ENCODE measurements at regions of chr9 and their contacts with region 1.

Region 1: DNA sequence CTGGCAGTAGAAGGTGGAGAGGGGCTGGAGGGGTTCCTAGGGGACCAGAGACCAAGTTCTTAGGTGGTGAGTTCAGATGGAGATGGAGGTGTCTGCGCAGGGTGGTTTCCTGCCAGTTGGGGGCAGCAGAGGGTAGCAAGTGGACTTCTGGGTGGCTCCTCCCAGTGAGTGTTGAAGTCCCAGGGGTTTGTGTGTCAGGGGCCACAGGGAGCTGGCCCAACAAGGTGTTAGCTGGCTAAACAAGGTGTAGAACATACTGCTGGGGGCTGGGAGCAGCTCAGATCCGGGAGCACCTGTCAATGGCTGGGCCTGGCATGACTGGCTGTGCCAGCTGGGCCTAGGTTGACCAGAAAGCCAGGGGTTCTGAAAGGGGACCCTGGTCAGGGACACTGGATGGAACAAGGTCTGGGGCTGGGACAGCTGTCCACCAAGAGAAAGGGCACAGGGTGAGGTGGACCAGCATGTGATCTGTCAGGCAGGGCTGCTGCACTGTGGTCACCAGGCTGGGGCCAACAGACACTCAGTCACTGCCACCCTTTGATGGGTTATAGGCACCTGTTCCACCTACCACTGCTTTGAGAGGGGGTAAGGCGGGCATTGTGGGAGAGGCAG is 35.6 kb downstream of the DAB2IP start:
- DNase-seq: peak; percentile 76 to 92 (median 87)
- ATAC-seq: peak; percentile 61 to 68
- H3K4me3 ChIP-seq: no peak overlapping the region
- H3K27ac ChIP-seq: no peak overlapping the region
- H3K4me1 ChIP-seq: peaks cover 6% of the 10 kb centered on the region
- H3K27me3 ChIP-seq: no peaks in the 10 kb centered on the region

Region 2: GRCh38 chr9:121498150-121498486 is 188.9 kb before region 1 on chr9:
- intact Hi-C with region 1: no loop called
- DNase-seq: peak in 2 of 3 donors; percentile 43 to 73
- ATAC-seq: peak; percentile 54 to 65
- H3K4me3 ChIP-seq: peak overlapping the region; percentile 59
- H3K27ac ChIP-seq: peak overlapping the region; percentile 57
- H3K4me1 ChIP-seq: peaks cover 2% of the 10 kb centered on the region
- H3K27me3 ChIP-seq: no peaks in the 10 kb centered on the region

Region 3: GRCh38 chr9:121545875-121546423 is 141.1 kb before region 1 on chr9:
- intact Hi-C with region 1: loop called in 2 of 4 experiments (anchors 5 to 10 kb)
- DNase-seq: peak; percentile 98 to 99 (median 99)
- ATAC-seq: peak; percentile 92 to 95
- H3K4me3 ChIP-seq: no peak overlapping the region
- H3K27ac ChIP-seq: no peak overlapping the region
- H3K4me1 ChIP-seq: no peaks in the 10 kb centered on the region
- H3K27me3 ChIP-seq: no peaks in the 10 kb centered on the region

Region 4: GRCh38 chr9:121634329-121635261 is 52.4 kb before region 1 on chr9:
- intact Hi-C with region 1: loop called in 2 of 4 experiments (anchors 5 to 10 kb)
- DNase-seq: peak in 2 of 3 donors; percentile 49 to 68
- ATAC-seq: peak; percentile 54 to 69
- H3K4me3 ChIP-seq: no peak overlapping the region
- H3K27ac ChIP-seq: no peak overlapping the region
- H3K4me1 ChIP-seq: peaks cover 10% of the 10 kb centered on the region
- H3K27me3 ChIP-seq: no peaks in the 10 kb centered on the region